ENCODE measurements at regions of chr3 and their contacts with region 1.

Region 1: GRCh38 chr3:187738331-187739093 is 6.8 kb downstream of the BCL6 start:
- DNase-seq: peak; percentile 65 to 78 (median 67)
- H3K4me3 ChIP-seq: peak overlapping the region; percentile 88 to 89
- H3K4me3 Mint-ChIP-seq: peak overlapping the region; percentile 95 to 99 (median 96)
- H3K27ac ChIP-seq: peak overlapping the region; percentile 73
- H3K27ac Mint-ChIP-seq: peak overlapping the region; percentile 77 to 99 (median 94)
- H3K4me1 ChIP-seq: peaks cover 34% of the 10 kb centered on the region
- H3K4me1 Mint-ChIP-seq: peaks cover 22 to 58% (median 36%) of the 10 kb centered on the region in 4 donors
- H3K27me3 ChIP-seq: no peaks in the 10 kb centered on the region
- H3K27me3 Mint-ChIP-seq: no peaks in the 10 kb centered on the region

Region 2: GRCh38 chr3:187016639-187017345 is 721.7 kb before region 1 on chr3:
- CTCF ChIA-PET with region 1: no interaction called
- POLR2A ChIA-PET with region 1: no interaction called
- intact Hi-C with region 1: no loop called
- DNase-seq: no peak
- H3K4me3 ChIP-seq: no peak overlapping the region
- H3K4me3 Mint-ChIP-seq: peak overlapping the region in 2 of 8 donors; percentile 22 to 41
- H3K27ac ChIP-seq: peak overlapping the region; percentile 25
- H3K27ac Mint-ChIP-seq: peak overlapping the region; percentile 48 to 85 (median 82)
- H3K4me1 ChIP-seq: peaks cover 86% of the 10 kb centered on the region
- H3K4me1 Mint-ChIP-seq: peaks cover 47 to 89% (median 69%) of the 10 kb centered on the region in 4 donors
- H3K27me3 ChIP-seq: no peaks in the 10 kb centered on the region
- H3K27me3 Mint-ChIP-seq: no peaks in the 10 kb centered on the region

Region 3: DNA sequence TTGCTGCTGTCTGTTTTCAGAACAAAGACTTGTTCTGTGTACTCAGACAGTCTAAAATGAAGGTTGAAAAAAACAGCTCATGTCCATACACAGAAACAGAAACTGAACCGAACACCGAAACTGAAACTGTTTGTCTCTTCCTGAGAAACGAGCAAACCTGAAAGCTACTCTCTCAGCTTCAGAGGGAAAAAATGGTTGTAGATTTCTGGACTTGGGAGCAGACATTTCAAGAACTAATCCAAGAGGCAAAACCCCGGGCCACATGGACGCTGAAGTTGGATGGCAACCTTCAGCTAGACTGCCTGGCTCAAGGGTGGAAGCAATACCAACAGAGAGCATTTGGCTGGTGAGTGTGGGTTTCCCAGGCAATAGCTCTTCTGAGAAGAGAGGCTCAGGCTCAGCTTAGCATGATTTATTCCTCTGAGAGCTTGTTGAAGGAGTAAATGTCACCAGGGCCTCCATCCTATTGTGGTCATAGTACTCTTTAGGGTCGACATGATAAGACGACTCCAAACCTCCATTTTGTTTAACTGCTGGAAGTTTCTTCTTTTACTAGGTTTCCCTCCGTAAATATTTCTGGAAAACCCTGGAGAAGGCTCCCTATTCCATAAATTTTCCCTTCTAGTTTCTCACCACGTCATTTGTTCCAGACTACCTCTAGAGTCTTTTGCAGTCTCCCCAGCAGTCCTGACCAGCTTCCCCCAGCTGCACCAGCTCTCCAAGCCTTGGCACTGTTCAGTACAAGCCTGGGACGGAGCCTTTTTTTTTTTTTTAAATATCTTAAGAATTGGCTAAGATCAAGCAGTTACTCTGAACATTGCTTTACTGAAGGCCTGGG is 370.0 kb before region 1 on chr3 and contains the start of gene RTP4:
- CTCF ChIA-PET with region 1: no interaction called
- POLR2A ChIA-PET with region 1: interaction called, 13 read pairs
- intact Hi-C with region 1: no loop called
- DNase-seq: peak; percentile 50 to 70 (median 52)
- H3K4me3 ChIP-seq: peak within 1 kb of the TSS; percentile 85 to 93
- H3K4me3 Mint-ChIP-seq: peak within 1 kb of the TSS; percentile 92 to 99 (median 96)
- H3K27ac ChIP-seq: peak within 1 kb of the TSS; percentile 87
- H3K27ac Mint-ChIP-seq: peak within 1 kb of the TSS; percentile 93 to 99 (median 97)
- H3K4me1 ChIP-seq: peaks cover 24% of the 10 kb centered on the region
- H3K4me1 Mint-ChIP-seq: peaks cover 19 to 50% (median 29%) of the 10 kb centered on the region in 4 donors
- H3K27me3 ChIP-seq: no peaks in the 10 kb centered on the region
- H3K27me3 Mint-ChIP-seq: no peaks in the 10 kb centered on the region
- total RNA-seq, gene RTP4: 7.5 to 8.8 TPM

Region 4: DNA sequence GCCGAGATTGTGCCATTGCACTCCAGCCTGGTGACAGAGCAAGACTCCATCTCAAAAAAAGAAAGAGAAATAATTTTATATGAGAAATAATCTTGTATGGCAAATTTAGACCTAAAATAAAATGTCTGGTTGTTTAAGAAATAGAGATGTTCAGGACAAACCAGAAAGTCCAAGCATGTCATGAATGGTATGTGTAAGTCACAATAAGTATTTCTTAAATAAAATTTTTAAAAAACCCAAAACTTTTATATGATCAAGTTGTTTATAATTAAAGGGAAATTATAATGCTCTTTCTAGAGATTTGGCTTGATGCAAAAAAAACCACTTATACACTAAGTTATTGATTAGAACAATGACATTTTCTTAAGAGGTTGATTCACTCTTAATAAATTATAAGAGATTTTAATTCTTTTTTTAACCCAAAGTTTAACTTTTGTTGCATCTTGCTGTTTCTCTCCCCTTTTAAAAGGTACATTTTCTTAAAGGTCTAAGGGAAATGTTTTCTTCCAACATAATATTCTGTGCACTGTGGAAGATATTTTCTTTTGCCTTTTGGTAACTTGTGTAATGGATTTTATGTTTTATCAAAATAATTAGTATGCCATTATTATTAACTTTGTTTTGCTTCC is 264.6 kb before region 1 on chr3:
- CTCF ChIA-PET with region 1: no interaction called
- POLR2A ChIA-PET with region 1: no interaction called
- intact Hi-C with region 1: no loop called
- DNase-seq: no peak
- H3K4me3 ChIP-seq: no peak overlapping the region
- H3K4me3 Mint-ChIP-seq: no peak overlapping the region
- H3K27ac ChIP-seq: no peak overlapping the region
- H3K27ac Mint-ChIP-seq: no peak overlapping the region
- H3K4me1 ChIP-seq: no peaks in the 10 kb centered on the region
- H3K4me1 Mint-ChIP-seq: no peaks in the 10 kb centered on the region
- H3K27me3 ChIP-seq: no peaks in the 10 kb centered on the region
- H3K27me3 Mint-ChIP-seq: peaks cover under 1 to 6% of the 10 kb centered on the region in 2 donors

Region 5: GRCh38 chr3:187610981-187611511 is 127.5 kb before region 1 on chr3:
- CTCF ChIA-PET with region 1: no interaction called
- POLR2A ChIA-PET with region 1: no interaction called
- intact Hi-C with region 1: no loop called
- DNase-seq: no peak
- H3K4me3 ChIP-seq: no peak overlapping the region
- H3K4me3 Mint-ChIP-seq: no peak overlapping the region
- H3K27ac ChIP-seq: no peak overlapping the region
- H3K27ac Mint-ChIP-seq: no peak overlapping the region
- H3K4me1 ChIP-seq: no peaks in the 10 kb centered on the region
- H3K4me1 Mint-ChIP-seq: peaks cover 0 to 1% (median under 1%) of the 10 kb centered on the region in 4 donors
- H3K27me3 ChIP-seq: no peaks in the 10 kb centered on the region
- H3K27me3 Mint-ChIP-seq: peaks cover 30 to 40% of the 10 kb centered on the region in 2 donors

Region 6: GRCh38 chr3:187974871-187975271 is 236.4 kb after region 1 on chr3:
- CTCF ChIA-PET with region 1: interaction called, 40 read pairs
- POLR2A ChIA-PET with region 1: interaction called, 11 read pairs
- intact Hi-C with region 1: loop called (anchors 1 kb)
- DNase-seq: peak; percentile 55 to 70 (median 57)
- H3K4me3 ChIP-seq: peak overlapping the region; percentile 2 to 16
- H3K4me3 Mint-ChIP-seq: peak overlapping the region; percentile 57 to 90 (median 74)
- H3K27ac ChIP-seq: peak overlapping the region; percentile 46
- H3K27ac Mint-ChIP-seq: peak overlapping the region; percentile 85 to 98 (median 91)
- H3K4me1 ChIP-seq: peaks cover 55% of the 10 kb centered on the region
- H3K4me1 Mint-ChIP-seq: peaks cover 56 to 67% (median 62%) of the 10 kb centered on the region in 4 donors
- H3K27me3 ChIP-seq: no peaks in the 10 kb centered on the region
- H3K27me3 Mint-ChIP-seq: no peaks in the 10 kb centered on the region

Region 7: DNA sequence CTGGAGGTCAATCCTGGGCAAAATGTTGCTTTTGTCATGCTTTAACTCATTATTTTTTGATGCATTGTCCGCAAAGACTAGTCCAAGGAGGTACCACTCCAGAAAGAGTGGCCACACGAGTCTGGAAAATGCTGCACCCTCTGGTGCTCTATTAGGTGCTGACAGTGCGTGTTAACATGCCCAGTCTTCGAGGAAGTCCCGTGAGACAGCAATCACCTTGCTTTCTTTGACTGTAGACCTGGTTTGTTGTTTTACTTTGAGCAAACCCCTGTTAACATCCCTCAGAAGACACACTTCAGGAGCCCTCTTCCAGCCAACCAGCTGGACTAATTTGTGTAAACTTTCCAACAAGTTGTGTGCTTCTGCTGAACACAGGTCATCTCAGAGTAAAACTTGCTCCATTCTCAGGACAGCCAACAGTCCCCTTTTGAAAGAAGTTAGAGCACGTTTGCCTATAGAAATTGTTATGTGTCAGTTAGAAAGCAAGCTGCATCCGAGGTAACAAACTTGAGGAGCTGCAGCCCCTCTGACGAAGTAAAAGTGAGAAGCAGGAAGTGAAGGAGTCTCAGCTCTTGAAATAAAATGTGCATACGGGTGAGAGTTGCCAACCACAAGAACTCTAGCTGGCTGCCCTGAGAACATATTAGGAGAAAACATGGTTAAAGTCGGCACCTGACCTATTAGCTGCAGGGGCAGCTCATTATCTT is 620.4 kb after region 1 on chr3:
- CTCF ChIA-PET with region 1: interaction called, 10 read pairs
- POLR2A ChIA-PET with region 1: no interaction called
- intact Hi-C with region 1: loop called (anchors 10 kb)
- DNase-seq: peak in 4 of 5 donors; percentile 24 to 39 (median 30)
- H3K4me3 ChIP-seq: peak overlapping the region in 1 of 2 donors; percentile 4
- H3K4me3 Mint-ChIP-seq: peak overlapping the region; percentile 39 to 76 (median 70)
- H3K27ac ChIP-seq: no peak overlapping the region
- H3K27ac Mint-ChIP-seq: peak overlapping the region; percentile 31 to 82 (median 73)
- H3K4me1 ChIP-seq: peaks cover 22% of the 10 kb centered on the region
- H3K4me1 Mint-ChIP-seq: peaks cover 36 to 55% (median 43%) of the 10 kb centered on the region in 4 donors
- H3K27me3 ChIP-seq: no peaks in the 10 kb centered on the region
- H3K27me3 Mint-ChIP-seq: no peaks in the 10 kb centered on the region

Region 8: DNA sequence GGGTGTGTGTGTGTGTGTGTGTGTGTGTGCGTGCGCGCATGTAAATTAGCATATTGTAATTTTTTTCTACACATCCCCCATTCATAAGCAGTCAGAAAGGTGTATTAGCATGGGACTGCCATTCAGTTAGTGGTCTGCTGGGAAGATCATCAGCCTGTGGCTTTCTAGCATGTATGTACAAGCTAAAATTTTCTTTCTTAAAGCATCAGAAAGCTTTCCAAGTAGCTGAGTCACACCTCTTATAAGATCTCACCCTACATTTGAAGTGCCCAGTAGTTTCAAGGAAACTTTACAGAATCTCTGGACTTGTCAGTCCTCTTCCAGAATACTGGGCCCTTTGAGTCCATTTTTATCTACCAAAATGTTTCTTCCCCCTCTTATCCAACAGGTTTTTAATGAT is 1021.9 kb after region 1 on chr3:
- CTCF ChIA-PET with region 1: interaction called, 23 read pairs
- POLR2A ChIA-PET with region 1: no interaction called
- intact Hi-C with region 1: no loop called
- DNase-seq: no peak
- H3K4me3 ChIP-seq: no peak overlapping the region
- H3K4me3 Mint-ChIP-seq: no peak overlapping the region
- H3K27ac ChIP-seq: no peak overlapping the region
- H3K27ac Mint-ChIP-seq: peak overlapping the region in 1 of 7 donors; percentile 25
- H3K4me1 ChIP-seq: no peaks in the 10 kb centered on the region
- H3K4me1 Mint-ChIP-seq: peaks cover 0 to 7% (median 3%) of the 10 kb centered on the region in 4 donors
- H3K27me3 ChIP-seq: no peaks in the 10 kb centered on the region
- H3K27me3 Mint-ChIP-seq: no peaks in the 10 kb centered on the region

Region 9: GRCh38 chr3:188947401-188948280 is 1209.1 kb after region 1 on chr3:
- CTCF ChIA-PET with region 1: interaction called, 729 read pairs
- POLR2A ChIA-PET with region 1: interaction called, 90 read pairs
- intact Hi-C with region 1: no loop called
- DNase-seq: no peak
- H3K4me3 ChIP-seq: no peak overlapping the region
- H3K4me3 Mint-ChIP-seq: peak overlapping the region in 3 of 8 donors; percentile 23 to 49 (median 32)
- H3K27ac ChIP-seq: no peak overlapping the region
- H3K27ac Mint-ChIP-seq: no peak overlapping the region
- H3K4me1 ChIP-seq: no peaks in the 10 kb centered on the region
- H3K4me1 Mint-ChIP-seq: peaks cover 0 to 3% (median 0%) of the 10 kb centered on the region in 4 donors
- H3K27me3 ChIP-seq: no peaks in the 10 kb centered on the region
- H3K27me3 Mint-ChIP-seq: peaks cover 3 to 9% of the 10 kb centered on the region in 2 donors

Region 10: DNA sequence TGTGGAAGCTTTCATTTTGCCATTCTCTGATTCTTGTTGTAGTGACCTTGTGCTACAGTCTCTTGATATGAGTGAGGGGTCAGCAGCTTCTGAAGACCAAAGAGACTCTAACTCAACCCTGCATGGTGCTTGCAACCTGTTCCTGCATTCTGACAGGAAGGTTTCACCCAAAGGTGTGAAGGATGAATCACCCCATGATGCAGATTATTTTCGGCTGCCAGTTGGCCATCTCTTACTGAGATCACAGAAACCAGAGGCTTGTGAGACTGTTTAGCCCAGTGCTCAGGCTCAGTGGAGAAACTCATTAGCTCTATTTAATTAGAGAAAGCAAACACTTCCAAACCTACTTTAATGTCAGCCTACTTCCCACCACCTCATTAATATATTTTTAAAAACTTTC is 1404.0 kb after region 1 on chr3:
- CTCF ChIA-PET with region 1: interaction called, 391 read pairs
- POLR2A ChIA-PET with region 1: interaction called, 56 read pairs
- intact Hi-C with region 1: loop called (anchors 1 kb)
- DNase-seq: peak in 4 of 5 donors; percentile 6 to 66 (median 22)
- H3K4me3 ChIP-seq: no peak overlapping the region
- H3K4me3 Mint-ChIP-seq: peak overlapping the region in 4 of 8 donors; percentile 8 to 24 (median 15)
- H3K27ac ChIP-seq: no peak overlapping the region
- H3K27ac Mint-ChIP-seq: peak overlapping the region in 5 of 7 donors; percentile 33 to 77 (median 61)
- H3K4me1 ChIP-seq: peaks cover 28% of the 10 kb centered on the region
- H3K4me1 Mint-ChIP-seq: peaks cover 17 to 43% (median 24%) of the 10 kb centered on the region in 4 donors
- H3K27me3 ChIP-seq: no peaks in the 10 kb centered on the region
- H3K27me3 Mint-ChIP-seq: no peaks in the 10 kb centered on the region